ENCODE measurements at regions of chr18 and their contacts with region 1.

Region 1: DNA sequence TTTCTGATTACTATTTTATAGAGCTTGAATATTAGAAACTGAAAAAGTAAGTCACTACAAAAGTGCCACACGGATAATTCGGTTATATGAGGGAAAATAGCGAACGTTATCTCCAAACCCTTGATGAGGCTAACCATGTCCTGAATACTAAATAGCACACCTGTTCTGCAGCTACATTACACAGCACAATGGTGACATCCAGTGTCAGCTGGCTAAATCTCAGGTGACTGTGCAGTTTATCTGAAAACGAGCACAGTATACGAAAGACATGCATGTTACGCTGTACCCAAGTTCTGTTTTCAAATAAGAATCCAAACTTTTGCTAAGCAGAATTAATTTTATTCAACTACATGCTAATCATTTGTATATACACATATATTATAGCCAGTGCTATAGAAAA is 9.0 kb downstream of the CCDC68 start:
- DNase-seq: no peak
- H3K4me3 ChIP-seq: no peak overlapping the region
- H3K27ac ChIP-seq: no peak overlapping the region
- H3K4me1 ChIP-seq: no peaks in the 10 kb centered on the region
- H3K27me3 ChIP-seq: no peaks in the 10 kb centered on the region
- CTCF ChIP-seq: peak in 2 of 3 experiments; percentile 5 to 21; a peak in 1 of 4 replicates
- EP300 ChIP-seq: no peak
- POLR2A ChIP-seq: no peak
- RAD21 ChIP-seq: peak; percentile 63 to 78

Region 2: GRCh38 chr18:54679318-54680149 is 270.7 kb before region 1 on chr18:
- CTCF ChIA-PET with region 1: interaction called, 18 read pairs
- POLR2A ChIA-PET with region 1: no interaction called
- DNase-seq: no peak
- H3K4me3 ChIP-seq: no peak overlapping the region
- H3K27ac ChIP-seq: no peak overlapping the region
- H3K4me1 ChIP-seq: no peaks in the 10 kb centered on the region
- H3K27me3 ChIP-seq: no peaks in the 10 kb centered on the region
- CTCF ChIP-seq: peak in 2 of 3 experiments; percentile 48 to 55; a peak in 3 of 4 replicates
- EP300 ChIP-seq: no peak
- POLR2A ChIP-seq: no peak
- RAD21 ChIP-seq: peak; percentile 88 to 90

Measured in H1 (cell line).